ENCODE measurements at regions of chr15 and their contacts with region 1.

Region 1: DNA sequence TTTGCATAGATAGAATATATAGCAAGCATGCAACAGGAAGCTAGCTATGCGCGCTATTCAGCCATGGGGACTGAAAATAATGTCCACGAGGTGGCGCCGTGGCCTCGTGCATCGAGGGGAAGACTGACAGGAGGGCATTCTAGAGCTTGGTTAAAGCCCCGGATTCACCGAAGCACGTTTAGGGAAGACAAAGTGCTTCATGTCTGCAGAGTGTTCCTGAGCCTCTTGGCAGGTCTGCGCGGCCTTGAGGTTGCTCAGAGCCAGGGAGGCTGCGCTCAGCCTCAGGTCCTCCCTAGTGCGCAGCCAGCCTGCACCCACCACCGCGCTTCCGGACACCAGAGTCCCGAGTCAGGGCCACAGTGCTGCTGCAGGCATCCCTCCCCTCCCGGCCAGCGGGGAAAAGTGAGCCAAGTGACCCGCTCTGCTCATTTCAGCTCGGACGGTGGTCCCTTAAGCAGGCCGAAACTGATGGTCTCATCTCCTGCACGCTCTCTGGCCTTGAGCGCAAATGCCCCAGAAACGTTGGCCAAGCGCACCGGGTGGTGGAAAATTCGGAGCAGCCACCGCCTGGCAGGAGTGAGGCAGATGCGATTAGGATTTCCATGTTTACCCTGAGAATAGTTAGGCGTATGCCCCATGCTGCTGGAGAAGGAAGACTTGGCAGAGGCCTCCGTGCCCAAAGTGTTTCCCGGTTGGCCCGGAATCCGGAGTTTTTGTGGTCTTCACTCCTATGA is 24.8 kb downstream of the GABRA5 start:
- DNase-seq: peak; percentile 83
- H3K4me3 ChIP-seq: peak overlapping the region; percentile 31 to 55; a peak in 3 of 4 replicates
- H3K27ac ChIP-seq: no peak overlapping the region
- H3K4me1 ChIP-seq: peaks cover 0 to 5% of the 10 kb centered on the region in 2 experiments; a peak in 2 of 4 replicates
- H3K27me3 ChIP-seq: no peaks in the 10 kb centered on the region
- CTCF ChIP-seq: peak; percentile 71
- EP300 ChIP-seq: no peak
- RAD21 ChIP-seq: peak; percentile 93

Region 2: DNA sequence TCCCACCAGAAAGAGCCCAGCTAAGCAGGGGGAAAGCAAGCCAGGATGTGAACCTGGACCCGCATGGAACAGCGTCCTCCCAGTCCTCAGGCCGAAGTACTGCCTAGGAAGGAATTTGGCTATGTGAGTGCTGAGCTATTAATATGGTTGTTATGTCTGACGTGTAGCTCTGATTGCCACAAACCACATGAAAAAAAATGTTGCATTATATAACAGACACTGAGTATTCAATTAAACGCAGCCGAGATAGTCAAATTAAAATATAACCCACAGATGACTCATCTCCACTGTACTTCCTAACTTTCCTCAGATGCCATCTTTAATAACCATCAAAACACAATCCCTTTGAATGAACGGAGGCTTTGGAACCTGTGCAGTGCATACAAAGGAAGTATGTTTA is 229.9 kb before region 1 on chr15:
- CTCF ChIA-PET with region 1: no interaction called
- POLR2A ChIA-PET with region 1: no interaction called
- DNase-seq: no peak
- H3K4me3 ChIP-seq: no peak overlapping the region
- H3K27ac ChIP-seq: peak overlapping the region in 1 of 2 experiments; percentile 53; a peak in 2 of 4 replicates
- H3K4me1 ChIP-seq: peaks cover 0 to 22% of the 10 kb centered on the region in 2 experiments; a peak in 2 of 4 replicates
- H3K27me3 ChIP-seq: no peaks in the 10 kb centered on the region
- CTCF ChIP-seq: no peak
- EP300 ChIP-seq: no peak
- RAD21 ChIP-seq: no peak

Region 3: DNA sequence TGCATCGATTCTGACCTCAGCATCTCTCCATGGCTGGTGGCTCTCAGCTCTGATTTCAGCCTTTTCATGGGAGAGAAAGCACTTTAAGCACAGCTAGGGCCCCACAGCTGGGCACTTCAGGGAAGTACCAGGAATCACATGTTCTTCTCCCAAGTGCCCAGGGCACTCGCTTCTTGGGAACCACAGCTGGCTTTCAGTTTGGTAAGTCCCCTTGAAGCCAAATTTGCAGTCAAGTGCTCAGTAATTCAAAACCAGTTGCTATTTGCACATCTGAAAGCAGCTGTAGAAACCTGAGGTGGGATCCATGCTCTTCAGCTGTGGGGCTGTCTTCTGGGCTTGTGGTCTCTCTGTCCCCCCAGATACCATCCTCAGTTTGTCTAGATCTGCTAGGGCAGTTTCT is 11.9 kb before region 1 on chr15:
- CTCF ChIA-PET with region 1: interaction called, 33 read pairs
- POLR2A ChIA-PET with region 1: no interaction called
- DNase-seq: no peak
- H3K4me3 ChIP-seq: no peak overlapping the region
- H3K27ac ChIP-seq: no peak overlapping the region
- H3K4me1 ChIP-seq: no peaks in the 10 kb centered on the region
- H3K27me3 ChIP-seq: no peaks in the 10 kb centered on the region
- CTCF ChIP-seq: no peak
- EP300 ChIP-seq: no peak
- RAD21 ChIP-seq: no peak

Region 4: GRCh38 chr15:26974120-26974780 is 82.6 kb after region 1 on chr15:
- CTCF ChIA-PET with region 1: interaction called, 29 read pairs
- POLR2A ChIA-PET with region 1: no interaction called
- DNase-seq: peak; percentile 50
- H3K4me3 ChIP-seq: no peak overlapping the region; a peak in 1 of 4 replicates
- H3K27ac ChIP-seq: no peak overlapping the region
- H3K4me1 ChIP-seq: no peaks in the 10 kb centered on the region; a peak in 1 of 4 replicates
- H3K27me3 ChIP-seq: no peaks in the 10 kb centered on the region
- CTCF ChIP-seq: peak; percentile 35; the same call in 1 of the 2 replicates
- EP300 ChIP-seq: no peak
- RAD21 ChIP-seq: peak; percentile 51

Region 5: GRCh38 chr15:27025481-27025966 is 133.9 kb after region 1 on chr15:
- CTCF ChIA-PET with region 1: interaction called, 107 read pairs
- POLR2A ChIA-PET with region 1: no interaction called
- DNase-seq: no peak
- H3K4me3 ChIP-seq: no peak overlapping the region
- H3K27ac ChIP-seq: no peak overlapping the region
- H3K4me1 ChIP-seq: peaks cover 0 to 7% of the 10 kb centered on the region in 2 experiments; a peak in 1 of 4 replicates
- H3K27me3 ChIP-seq: no peaks in the 10 kb centered on the region
- CTCF ChIP-seq: no peak
- EP300 ChIP-seq: no peak
- RAD21 ChIP-seq: no peak

Region 6: DNA sequence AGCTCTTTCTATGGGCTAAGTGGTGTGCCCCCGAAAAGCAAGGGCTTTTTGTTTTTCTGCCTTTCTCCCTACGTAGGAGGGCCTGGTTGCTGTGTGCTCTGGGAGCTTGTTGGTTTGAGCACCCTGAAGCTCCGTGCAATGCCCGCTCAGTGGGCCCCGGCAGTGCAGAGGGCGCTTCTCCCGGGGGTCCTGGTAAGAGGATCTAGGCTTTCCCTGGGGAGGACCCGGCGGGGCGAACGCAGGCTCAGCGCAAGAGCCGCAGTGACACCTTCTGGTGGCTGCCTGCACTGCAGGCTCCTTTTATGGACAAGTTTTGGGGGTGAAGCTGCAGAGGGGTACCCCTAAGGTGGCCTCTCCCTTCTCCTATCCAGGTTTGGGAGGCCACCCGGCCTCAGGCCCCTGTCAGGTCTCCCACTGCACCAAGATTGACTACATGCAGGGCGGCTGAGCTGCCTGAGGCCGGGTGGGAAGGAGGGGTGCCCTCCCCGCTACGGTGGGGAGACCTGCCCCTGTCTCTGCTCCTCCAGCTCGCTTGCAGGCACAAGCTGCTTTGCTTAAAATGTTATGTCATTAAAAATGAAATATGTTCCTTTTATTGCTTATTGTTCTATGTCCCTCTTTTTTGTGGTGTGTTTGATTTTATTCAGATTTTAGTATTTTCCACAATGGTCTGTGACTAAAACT is 467.3 kb after region 1 on chr15:
- CTCF ChIA-PET with region 1: interaction called, 33 read pairs
- POLR2A ChIA-PET with region 1: no interaction called
- DNase-seq: peak; percentile 41
- H3K4me3 ChIP-seq: no peak overlapping the region; a peak in 1 of 4 replicates
- H3K27ac ChIP-seq: no peak overlapping the region
- H3K4me1 ChIP-seq: no peaks in the 10 kb centered on the region; a peak in 1 of 4 replicates
- H3K27me3 ChIP-seq: no peaks in the 10 kb centered on the region
- CTCF ChIP-seq: peak; percentile 29
- EP300 ChIP-seq: no peak
- RAD21 ChIP-seq: peak; percentile 67

Region 7: DNA sequence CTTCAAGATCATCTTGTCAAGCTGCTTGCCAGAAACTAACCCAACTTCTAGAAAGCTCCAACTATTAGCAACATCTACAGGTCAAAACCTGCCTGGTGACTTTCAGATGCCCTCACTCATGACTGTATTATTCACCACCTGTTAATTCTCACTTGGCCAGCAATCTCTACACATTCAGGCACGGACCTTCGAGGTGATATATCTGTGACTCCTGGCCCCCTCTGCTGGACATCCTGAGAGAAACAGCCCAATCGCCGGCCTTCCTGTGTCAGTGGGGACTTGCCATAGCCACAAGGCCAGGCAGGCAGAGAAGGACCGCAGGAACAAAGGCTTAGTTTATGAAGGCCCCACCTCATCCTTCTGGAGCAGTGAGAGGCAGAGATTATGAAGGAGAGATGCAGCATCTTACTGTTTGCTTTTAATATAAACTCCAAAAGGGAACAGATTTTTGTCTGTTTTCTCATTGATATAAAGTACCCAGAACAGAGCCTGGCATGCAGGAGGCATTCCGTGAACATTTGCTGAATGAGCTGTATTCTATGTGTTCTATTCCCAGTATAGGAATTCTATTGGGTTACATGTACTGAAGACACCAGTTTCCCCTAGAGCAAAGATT is 1231.9 kb after region 1 on chr15:
- CTCF ChIA-PET with region 1: interaction called, 22 read pairs
- POLR2A ChIA-PET with region 1: no interaction called
- DNase-seq: peak; percentile 87
- H3K4me3 ChIP-seq: peak overlapping the region in 1 of 2 experiments; percentile 14; a peak in 1 of 4 replicates
- H3K27ac ChIP-seq: no peak overlapping the region
- H3K4me1 ChIP-seq: no peaks in the 10 kb centered on the region; a peak in 1 of 4 replicates
- H3K27me3 ChIP-seq: no peaks in the 10 kb centered on the region
- CTCF ChIP-seq: peak; percentile 83
- EP300 ChIP-seq: no peak
- RAD21 ChIP-seq: peak; percentile 80

Measured in SK-N-SH (cell line).